Activated CD4-positive, alpha-beta memory T cell treated with anti-CD3 and anti-CD28 coated beads for 36 hours (primary cell): ENCODE measurements at regions of chr4 and their contacts with region 1.

Region 1: DNA sequence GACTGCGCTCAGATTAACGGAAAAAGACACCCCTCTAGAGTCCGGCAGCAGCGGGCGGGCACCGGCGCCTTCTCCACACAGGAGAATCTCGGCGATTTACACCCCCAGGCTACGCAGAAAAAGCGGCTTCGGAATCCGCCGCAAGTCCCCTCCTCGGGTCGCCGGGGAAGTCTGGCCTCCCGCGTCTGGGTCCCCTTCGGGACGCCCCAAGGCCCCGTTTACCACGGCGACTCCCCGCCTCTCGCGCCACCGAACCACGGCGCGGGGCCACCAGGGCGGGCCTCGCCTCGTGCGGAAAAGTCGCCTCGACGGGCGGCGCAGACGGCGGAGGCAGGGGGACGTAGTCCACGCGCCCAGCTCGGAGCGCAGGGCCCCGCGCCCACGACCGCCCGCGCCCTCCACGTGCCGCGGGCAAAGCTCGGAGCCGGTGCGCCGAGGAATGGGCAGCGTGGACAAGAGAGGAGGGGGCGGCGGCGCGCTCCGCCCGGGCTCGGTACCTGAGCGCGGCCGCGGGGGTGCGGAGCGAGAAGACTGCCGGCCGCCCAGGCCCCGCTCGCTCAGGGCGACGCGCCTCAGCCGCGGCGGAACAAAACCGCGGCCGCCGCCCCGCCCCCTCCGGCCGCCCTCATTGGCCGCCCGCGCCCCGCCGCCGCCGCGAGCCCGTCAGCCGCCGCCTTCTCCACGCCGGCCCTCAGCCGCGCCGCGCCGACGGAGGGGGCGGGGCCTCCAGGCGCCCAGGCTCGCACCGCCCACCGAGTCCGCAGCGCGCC is at the start of gene FAM53A:
- DNase-seq: peak; percentile 26
- H3K4me3 Mint-ChIP-seq: peak within 1 kb of the TSS; percentile 76
- H3K27ac Mint-ChIP-seq: no peak within 1 kb of the TSS
- H3K4me1 Mint-ChIP-seq: peaks cover 9% of the 10 kb centered on the region
- H3K27me3 Mint-ChIP-seq: no peaks in the 10 kb centered on the region
- total RNA-seq, gene FAM53A: 1.3 to 1.4 TPM

Region 2: DNA sequence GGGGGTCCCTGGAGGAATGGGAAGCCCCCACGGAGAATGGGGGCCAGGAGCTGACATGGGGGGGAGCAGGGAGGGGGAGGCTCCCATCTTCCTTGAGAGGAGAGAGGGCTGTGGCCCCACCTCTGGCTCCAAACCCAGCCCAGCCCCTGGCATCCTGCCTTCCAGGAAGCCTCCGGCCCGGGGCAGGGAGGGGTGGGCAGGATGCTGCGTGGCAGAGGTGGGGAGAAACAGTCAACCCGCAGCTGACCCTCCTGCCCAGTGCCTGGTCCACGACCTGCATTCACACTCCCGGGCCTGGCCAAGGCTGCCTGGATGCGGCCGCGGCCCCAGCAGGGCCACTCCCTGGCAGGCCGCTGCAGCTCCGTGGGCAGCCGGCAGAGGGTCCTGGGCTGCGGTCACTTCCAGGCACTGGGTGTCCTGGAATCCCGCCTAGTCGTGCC is 897.0 kb before region 1 on chr4:
- CTCF ChIA-PET with region 1: no interaction called
- POLR2A ChIA-PET with region 1: no interaction called
- intact Hi-C with region 1: loop called (anchors 5 kb)
- DNase-seq: no peak
- H3K4me3 Mint-ChIP-seq: no peak overlapping the region
- H3K27ac Mint-ChIP-seq: no peak overlapping the region
- H3K4me1 Mint-ChIP-seq: peaks cover 19% of the 10 kb centered on the region
- H3K27me3 Mint-ChIP-seq: peaks cover 31% of the 10 kb centered on the region

Region 3: DNA sequence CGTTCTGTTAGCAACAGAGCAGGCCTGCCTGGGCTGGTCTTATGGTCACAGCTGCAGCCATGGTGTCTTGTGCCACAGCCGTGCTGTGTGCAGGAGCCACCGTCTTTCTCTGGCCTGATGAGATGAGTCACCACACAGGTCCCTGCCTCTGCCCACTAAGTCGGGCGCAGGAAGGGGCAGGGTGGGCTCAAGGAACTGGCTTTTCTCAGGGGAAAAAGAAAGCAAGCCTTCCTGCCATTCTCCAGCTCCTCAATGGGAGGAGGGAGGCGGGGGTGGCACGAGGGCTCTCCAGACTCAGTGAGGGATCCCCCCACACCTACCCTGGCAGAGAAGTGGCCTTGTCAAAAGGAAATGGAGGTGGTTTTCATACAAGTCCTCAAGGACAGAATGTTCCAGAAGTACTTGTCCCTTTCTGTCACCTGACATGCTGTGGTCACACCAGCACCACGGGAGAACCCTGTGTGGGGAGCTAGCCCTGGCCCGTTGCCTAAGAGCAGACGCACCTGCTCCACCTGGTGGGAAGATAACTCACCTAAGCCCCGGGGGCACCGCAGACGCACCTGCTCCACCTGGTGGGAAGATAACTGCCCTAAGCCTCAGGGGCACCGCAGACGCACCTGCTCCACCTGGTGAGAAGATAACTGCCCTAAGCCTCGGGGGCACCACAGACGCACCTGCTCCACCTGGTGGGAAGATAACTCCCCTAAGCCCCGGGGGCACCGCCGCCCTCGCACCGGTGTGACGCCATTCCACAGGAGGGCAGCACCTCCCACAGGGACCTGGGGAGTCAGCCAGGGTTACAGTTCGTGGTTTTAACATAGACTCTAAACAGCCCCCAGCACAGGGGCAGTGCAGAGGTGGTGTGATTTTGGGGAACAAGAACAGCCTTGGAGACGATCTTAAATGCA is 318.4 kb before region 1 on chr4:
- CTCF ChIA-PET with region 1: no interaction called
- POLR2A ChIA-PET with region 1: no interaction called
- intact Hi-C with region 1: no loop called
- DNase-seq: no peak
- H3K4me3 Mint-ChIP-seq: no peak overlapping the region
- H3K27ac Mint-ChIP-seq: no peak overlapping the region
- H3K4me1 Mint-ChIP-seq: no peaks in the 10 kb centered on the region
- H3K27me3 Mint-ChIP-seq: no peaks in the 10 kb centered on the region

Region 4: DNA sequence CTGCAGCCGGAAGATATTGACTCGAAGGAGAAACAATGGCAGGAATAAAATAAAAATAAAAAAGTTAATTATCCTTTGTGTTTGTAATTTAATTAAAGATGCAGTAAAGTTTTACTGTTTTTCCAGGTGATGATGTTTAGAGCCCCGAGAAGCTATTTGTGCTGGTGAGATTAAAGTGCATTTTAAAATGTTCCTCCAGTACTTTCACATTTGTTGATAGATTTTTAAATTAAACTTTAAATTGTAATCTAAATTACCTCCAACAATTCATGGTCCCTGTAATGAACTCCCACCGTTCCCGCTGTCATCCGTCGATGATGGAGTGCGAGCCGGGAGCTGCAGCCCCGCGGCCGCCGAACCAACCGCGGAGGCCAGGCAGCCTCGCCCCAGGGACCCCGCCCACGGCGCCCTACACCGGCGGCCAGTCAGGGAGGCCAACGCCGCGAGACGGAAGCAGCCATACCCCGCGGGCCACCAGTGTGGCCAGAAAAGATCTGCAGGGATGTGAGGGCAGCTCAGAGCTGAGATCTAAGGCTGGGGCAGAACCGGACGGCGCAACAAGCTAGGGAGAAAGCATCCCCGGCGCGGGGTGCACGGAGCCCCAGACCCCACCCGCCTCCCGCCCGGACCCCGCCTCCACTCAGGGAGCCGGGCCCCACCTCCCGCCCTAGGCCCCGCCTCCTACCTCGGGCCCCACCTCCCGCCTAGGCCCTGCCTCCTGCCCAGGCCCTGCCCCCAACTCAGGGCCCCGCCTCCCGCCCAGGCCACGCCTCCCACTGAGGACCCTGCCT is 103.8 kb before region 1 on chr4:
- CTCF ChIA-PET with region 1: no interaction called
- POLR2A ChIA-PET with region 1: interaction called, 3 read pairs
- intact Hi-C with region 1: loop called (anchors 1 kb)
- DNase-seq: peak; percentile 94
- H3K4me3 Mint-ChIP-seq: peak overlapping the region; percentile 73
- H3K27ac Mint-ChIP-seq: peak overlapping the region; percentile 65
- H3K4me1 Mint-ChIP-seq: peaks cover 4% of the 10 kb centered on the region
- H3K27me3 Mint-ChIP-seq: no peaks in the 10 kb centered on the region

Region 5: DNA sequence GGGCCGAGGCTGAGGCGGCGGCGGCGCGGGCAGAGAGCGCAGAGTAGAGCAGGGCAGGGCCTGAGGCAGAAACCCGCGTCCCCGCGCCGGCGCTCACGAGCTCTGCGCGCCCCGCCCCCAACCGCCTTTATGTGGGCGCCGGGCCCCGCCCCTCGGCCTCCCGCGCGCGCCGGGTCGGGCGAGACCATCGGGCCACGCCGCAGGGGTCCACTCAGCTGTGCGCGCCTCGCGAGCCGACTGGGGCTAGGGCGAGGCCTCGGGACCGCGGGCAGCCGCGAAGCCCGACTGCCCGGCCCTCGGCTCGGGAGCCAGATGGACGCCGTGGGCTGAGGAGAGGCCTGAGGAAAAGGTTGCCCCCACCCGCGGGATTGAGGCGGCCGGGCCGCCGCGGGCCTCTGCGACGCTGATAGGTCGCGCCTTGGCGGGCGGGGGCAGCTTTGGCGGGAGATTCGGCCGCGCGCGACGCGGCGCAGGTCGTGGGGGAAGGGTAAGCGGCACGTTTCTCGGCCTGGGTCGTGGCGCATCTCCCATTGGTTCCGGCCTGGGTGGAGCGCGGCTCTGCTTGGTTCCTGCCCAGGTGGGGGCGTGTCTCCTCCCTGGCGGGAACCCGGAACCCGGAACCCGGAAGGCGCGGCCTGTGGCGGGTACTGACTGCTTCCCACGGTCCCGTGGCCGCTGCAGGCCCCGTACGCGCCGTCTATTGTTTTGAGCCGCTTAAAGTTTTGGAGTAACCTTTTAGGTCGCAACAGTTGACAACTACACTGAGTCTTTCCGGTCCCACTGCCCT is 28.5 kb after region 1 on chr4 and contains the start of gene SLBP:
- CTCF ChIA-PET with region 1: no interaction called
- POLR2A ChIA-PET with region 1: no interaction called
- intact Hi-C with region 1: loop called (anchors 1 kb)
- DNase-seq: peak; percentile 99
- H3K4me3 Mint-ChIP-seq: peak within 1 kb of the TSS; percentile 99
- H3K27ac Mint-ChIP-seq: peak within 1 kb of the TSS; percentile 94
- H3K4me1 Mint-ChIP-seq: peaks cover 61% of the 10 kb centered on the region
- H3K27me3 Mint-ChIP-seq: no peaks in the 10 kb centered on the region
- total RNA-seq, gene SLBP: 103 to 106 TPM

Region 6: GRCh38 chr4:1856042-1856788 is 172.3 kb after region 1 on chr4 and contains the start of gene LETM1:
- CTCF ChIA-PET with region 1: no interaction called
- POLR2A ChIA-PET with region 1: interaction called, 3 read pairs
- intact Hi-C with region 1: loop called (anchors 10 kb)
- DNase-seq: peak; percentile 96
- H3K4me3 Mint-ChIP-seq: peak within 1 kb of the TSS; percentile 79
- H3K27ac Mint-ChIP-seq: peak within 1 kb of the TSS; percentile 49
- H3K4me1 Mint-ChIP-seq: peaks cover 32% of the 10 kb centered on the region
- H3K27me3 Mint-ChIP-seq: no peaks in the 10 kb centered on the region
- total RNA-seq, gene LETM1: 41.1 to 42.6 TPM